CD8-positive, alpha-beta T cell (primary cell): ENCODE measurements at regions of chr19 and their contacts with region 1.

Region 1: DNA sequence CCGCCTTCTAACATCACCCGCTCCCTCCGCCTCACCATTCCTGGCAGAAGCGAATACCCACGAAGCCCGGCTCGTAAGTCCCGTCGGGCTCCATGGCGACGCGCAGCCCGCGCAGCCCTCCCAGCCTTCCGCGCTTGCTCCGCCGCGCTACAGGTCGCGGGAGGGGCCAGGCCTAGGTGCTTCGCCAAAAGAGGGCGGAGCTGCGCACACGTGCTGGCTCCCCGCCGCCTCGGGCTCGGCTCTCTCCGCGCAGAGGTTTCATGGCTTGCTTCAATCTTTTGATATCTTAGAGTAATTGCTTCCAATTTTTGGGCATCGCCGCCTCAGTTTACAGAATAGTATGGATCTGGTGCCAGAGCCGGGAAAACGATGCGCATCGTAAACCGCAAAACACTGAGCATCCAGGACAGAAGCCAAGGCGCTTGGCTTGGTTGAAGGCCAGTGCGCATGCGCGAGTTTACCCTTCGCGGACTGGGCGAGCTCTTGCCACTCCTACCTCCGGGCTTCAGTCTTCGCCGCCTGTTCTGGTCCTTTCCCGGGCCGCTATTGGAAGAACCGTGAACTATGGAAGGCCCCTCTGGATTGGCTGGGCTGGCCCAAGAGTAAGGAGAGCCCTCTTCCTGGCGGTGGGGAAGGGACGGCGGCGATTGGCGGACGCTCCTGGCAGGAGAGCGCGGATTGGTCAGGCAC is at the start of gene POLR2I:
- DNase-seq: peak; percentile 96 to 100 (median 99)
- ATAC-seq: peak; percentile 85
- H3K4me3 ChIP-seq: peak within 1 kb of the TSS; percentile 71 to 73
- H3K4me3 Mint-ChIP-seq: peak within 1 kb of the TSS; percentile 92
- H3K27ac ChIP-seq: peak within 1 kb of the TSS; percentile 77 to 92
- H3K27ac Mint-ChIP-seq: peak within 1 kb of the TSS; percentile 97
- H3K4me1 ChIP-seq: peaks cover 18% of the 10 kb centered on the region
- H3K4me1 Mint-ChIP-seq: peaks cover 39% of the 10 kb centered on the region
- H3K27me3 ChIP-seq: no peaks in the 10 kb centered on the region
- H3K27me3 Mint-ChIP-seq: no peaks in the 10 kb centered on the region
- CTCF ChIP-seq: no peak
- total RNA-seq, gene POLR2I: 27.4 to 34.7 TPM

Region 2: DNA sequence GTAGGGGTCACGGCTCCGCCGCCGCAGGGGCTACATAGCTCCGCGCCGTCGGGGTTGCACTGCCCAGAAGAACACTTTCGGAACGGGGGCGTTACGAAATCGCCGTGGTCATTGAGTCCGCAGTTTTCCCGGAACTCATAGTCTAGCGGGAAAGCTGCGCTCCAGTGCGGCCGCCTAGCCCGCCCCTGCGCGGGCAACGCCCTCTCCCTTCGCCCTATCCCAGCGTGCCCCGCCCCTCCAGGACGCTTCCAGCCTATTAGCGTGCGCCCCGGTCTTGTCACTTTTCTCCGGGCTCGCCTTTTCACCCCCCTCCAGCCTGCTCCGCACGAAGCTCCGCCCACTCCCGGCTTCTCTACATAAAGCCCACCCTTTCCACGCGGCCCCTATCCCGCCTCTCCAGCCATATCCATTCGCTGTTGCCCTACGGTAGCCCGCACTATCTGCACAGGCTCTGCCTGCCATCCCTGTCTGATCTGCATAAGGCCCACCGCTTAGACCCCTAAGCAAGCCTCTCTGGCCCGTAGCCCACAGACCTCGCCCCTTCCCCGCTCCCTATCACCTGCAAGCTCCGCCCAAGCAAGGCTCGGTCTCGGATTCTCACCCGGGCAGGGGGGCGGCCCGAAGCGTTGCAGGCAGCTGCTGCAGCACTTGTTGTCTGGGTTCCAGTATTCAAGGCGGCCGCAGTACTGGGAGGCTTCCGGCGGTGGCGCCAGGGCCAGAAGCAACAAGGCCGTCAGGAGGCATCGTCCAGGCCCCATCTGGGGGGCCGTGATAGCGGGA is 374.3 kb before region 1 on chr19:
- CTCF ChIA-PET with region 1: no interaction called
- POLR2A ChIA-PET with region 1: no interaction called
- intact Hi-C with region 1: loop called in 1 of 2 experiments (anchors 10 kb)
- DNase-seq: peak; percentile 87 to 97 (median 95)
- ATAC-seq: peak; percentile 65
- H3K4me3 ChIP-seq: peak overlapping the region; percentile 60 to 63
- H3K4me3 Mint-ChIP-seq: peak overlapping the region; percentile 87
- H3K27ac ChIP-seq: peak overlapping the region; percentile 50 to 58
- H3K27ac Mint-ChIP-seq: peak overlapping the region; percentile 83
- H3K4me1 ChIP-seq: peaks cover 51% of the 10 kb centered on the region
- H3K4me1 Mint-ChIP-seq: peaks cover 53% of the 10 kb centered on the region
- H3K27me3 ChIP-seq: no peaks in the 10 kb centered on the region
- H3K27me3 Mint-ChIP-seq: no peaks in the 10 kb centered on the region
- CTCF ChIP-seq: no peak

Region 3: DNA sequence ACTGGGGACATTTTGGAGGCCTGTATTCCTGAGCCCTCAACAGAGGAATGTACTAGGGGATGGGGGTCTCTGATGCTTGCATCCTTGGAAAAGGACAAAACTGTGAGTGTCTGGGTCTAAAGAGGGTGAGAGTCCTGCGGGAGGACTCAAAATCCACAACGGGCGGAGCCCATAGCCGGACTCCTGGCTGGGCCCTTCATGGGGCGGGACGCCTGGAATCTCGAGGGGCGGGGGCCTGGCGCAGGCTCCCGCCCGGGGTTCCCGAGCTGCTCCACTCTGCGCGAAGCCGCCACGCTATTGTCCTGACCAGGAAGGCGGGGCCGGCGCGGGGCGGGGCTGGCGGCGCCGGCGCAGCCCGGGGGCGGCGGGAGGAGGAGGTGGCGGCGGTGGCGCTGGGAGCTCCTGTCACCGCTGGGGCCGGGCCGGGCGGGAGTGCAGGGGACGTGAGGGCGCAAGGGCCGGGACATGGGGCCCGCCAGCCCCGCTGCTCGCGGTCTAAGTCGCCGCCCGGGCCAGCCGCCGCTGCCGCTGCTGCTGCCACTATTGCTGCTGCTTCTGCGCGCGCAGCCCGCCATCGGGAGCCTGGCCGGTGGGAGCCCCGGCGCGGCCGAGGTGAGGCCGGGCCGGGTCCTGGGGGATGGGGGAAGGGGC is 246.6 kb before region 1 on chr19 and contains the start of gene APLP1:
- CTCF ChIA-PET with region 1: no interaction called
- POLR2A ChIA-PET with region 1: no interaction called
- intact Hi-C with region 1: no loop called
- DNase-seq: peak in 8 of 9 experiments; percentile 43 to 75 (median 62)
- ATAC-seq: peak; percentile 63
- H3K4me3 ChIP-seq: peak within 1 kb of the TSS in 1 of 2 experiments; percentile 32
- H3K4me3 Mint-ChIP-seq: peak within 1 kb of the TSS; percentile 74
- H3K27ac ChIP-seq: no peak within 1 kb of the TSS
- H3K27ac Mint-ChIP-seq: no peak within 1 kb of the TSS
- H3K4me1 ChIP-seq: peaks cover 21% of the 10 kb centered on the region
- H3K4me1 Mint-ChIP-seq: peaks cover 15% of the 10 kb centered on the region
- H3K27me3 ChIP-seq: peaks cover 24 to 30% of the 10 kb centered on the region in 2 experiments
- H3K27me3 Mint-ChIP-seq: peaks cover 33% of the 10 kb centered on the region
- CTCF ChIP-seq: no peak
- total RNA-seq, gene APLP1: not detected

Region 4: DNA sequence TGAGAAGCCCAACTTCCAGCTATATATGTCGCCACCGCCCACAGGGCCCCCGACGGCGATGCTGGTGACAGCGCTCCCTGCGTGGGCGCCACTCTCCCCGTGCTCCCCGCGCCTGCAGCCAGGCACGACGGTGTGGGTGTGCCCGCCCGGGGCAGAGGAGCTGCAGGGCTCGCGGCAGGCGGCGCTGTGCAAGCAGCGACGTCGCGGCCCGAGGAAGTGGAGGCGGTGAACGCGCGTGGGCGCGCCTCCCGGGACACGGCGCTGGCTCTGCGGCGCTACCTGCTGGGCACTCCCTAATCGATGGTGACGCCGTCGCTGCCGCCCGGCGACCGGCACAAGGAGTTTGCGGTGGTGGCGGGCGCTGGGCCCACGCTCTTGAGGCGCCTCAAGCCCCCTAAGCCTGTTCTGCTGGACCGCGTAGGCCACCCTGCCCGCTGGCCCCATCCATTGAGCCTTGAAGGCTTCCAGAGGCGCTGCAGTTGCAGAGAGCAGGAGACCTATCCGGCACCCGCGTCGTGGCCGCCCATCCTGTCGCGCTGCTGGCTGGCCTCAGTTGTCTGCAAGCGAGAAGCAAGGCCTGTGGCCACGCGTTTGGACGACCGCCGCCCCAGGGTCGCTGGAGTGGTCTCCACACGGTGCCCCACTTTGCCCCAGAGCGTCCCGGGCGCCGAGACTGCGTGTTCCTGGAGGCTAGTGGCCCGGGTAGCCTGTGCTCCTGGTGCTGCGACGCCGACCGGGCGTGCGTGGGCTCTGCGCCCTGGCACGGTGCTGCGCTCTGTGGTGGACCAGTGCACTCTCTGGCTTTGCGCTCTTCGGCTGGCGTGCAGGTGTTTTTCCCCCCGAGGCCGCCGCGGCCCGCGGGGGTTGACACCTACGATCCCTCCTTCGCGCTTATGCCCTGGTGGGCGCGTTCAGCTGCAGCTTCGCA is 155.6 kb before region 1 on chr19:
- CTCF ChIA-PET with region 1: no interaction called
- POLR2A ChIA-PET with region 1: no interaction called
- intact Hi-C with region 1: loop called in 1 of 2 experiments (anchors 2 kb)
- DNase-seq: peak; percentile 60 to 93 (median 82)
- ATAC-seq: peak; percentile 99
- H3K4me3 ChIP-seq: peak overlapping the region; percentile 57 to 62
- H3K4me3 Mint-ChIP-seq: peak overlapping the region; percentile 70
- H3K27ac ChIP-seq: peak overlapping the region in 1 of 2 experiments; percentile 25
- H3K27ac Mint-ChIP-seq: no peak overlapping the region
- H3K4me1 ChIP-seq: peaks cover 43% of the 10 kb centered on the region
- H3K4me1 Mint-ChIP-seq: peaks cover 37% of the 10 kb centered on the region
- H3K27me3 ChIP-seq: peaks cover 0 to 4% of the 10 kb centered on the region in 2 experiments
- H3K27me3 Mint-ChIP-seq: peaks cover 4% of the 10 kb centered on the region
- CTCF ChIP-seq: peak; percentile 77

Region 5: GRCh38 chr19:36014029-36014924 is 100.6 kb before region 1 on chr19 and contains the start of gene ALKBH6:
- CTCF ChIA-PET with region 1: no interaction called
- POLR2A ChIA-PET with region 1: interaction called, 10 read pairs
- intact Hi-C with region 1: loop called (anchors 1 kb)
- DNase-seq: peak; percentile 98 to 99 (median 99)
- ATAC-seq: peak; percentile 98
- H3K4me3 ChIP-seq: peak within 1 kb of the TSS; percentile 73 to 80
- H3K4me3 Mint-ChIP-seq: peak within 1 kb of the TSS; percentile 91
- H3K27ac ChIP-seq: peak within 1 kb of the TSS; percentile 82 to 85
- H3K27ac Mint-ChIP-seq: peak within 1 kb of the TSS; percentile 91
- H3K4me1 ChIP-seq: peaks cover 23% of the 10 kb centered on the region
- H3K4me1 Mint-ChIP-seq: peaks cover 43% of the 10 kb centered on the region
- H3K27me3 ChIP-seq: no peaks in the 10 kb centered on the region
- H3K27me3 Mint-ChIP-seq: no peaks in the 10 kb centered on the region
- CTCF ChIP-seq: no peak
- total RNA-seq, gene ALKBH6: 28.8 to 34.1 TPM

Region 6: GRCh38 chr19:36132489-36132891 is 17.6 kb after region 1 on chr19:
- CTCF ChIA-PET with region 1: interaction called, 30 read pairs
- POLR2A ChIA-PET with region 1: interaction called, 21 read pairs
- intact Hi-C with region 1: loop called (anchors 1 kb)
- DNase-seq: peak in 4 of 9 experiments; percentile 19 to 60 (median 37)
- ATAC-seq: no peak
- H3K4me3 ChIP-seq: no peak overlapping the region
- H3K4me3 Mint-ChIP-seq: no peak overlapping the region
- H3K27ac ChIP-seq: peak overlapping the region in 1 of 2 experiments; percentile 54
- H3K27ac Mint-ChIP-seq: no peak overlapping the region
- H3K4me1 ChIP-seq: peaks cover 5% of the 10 kb centered on the region
- H3K4me1 Mint-ChIP-seq: peaks cover 15% of the 10 kb centered on the region
- H3K27me3 ChIP-seq: no peaks in the 10 kb centered on the region
- H3K27me3 Mint-ChIP-seq: no peaks in the 10 kb centered on the region
- CTCF ChIP-seq: no peak

Region 7: DNA sequence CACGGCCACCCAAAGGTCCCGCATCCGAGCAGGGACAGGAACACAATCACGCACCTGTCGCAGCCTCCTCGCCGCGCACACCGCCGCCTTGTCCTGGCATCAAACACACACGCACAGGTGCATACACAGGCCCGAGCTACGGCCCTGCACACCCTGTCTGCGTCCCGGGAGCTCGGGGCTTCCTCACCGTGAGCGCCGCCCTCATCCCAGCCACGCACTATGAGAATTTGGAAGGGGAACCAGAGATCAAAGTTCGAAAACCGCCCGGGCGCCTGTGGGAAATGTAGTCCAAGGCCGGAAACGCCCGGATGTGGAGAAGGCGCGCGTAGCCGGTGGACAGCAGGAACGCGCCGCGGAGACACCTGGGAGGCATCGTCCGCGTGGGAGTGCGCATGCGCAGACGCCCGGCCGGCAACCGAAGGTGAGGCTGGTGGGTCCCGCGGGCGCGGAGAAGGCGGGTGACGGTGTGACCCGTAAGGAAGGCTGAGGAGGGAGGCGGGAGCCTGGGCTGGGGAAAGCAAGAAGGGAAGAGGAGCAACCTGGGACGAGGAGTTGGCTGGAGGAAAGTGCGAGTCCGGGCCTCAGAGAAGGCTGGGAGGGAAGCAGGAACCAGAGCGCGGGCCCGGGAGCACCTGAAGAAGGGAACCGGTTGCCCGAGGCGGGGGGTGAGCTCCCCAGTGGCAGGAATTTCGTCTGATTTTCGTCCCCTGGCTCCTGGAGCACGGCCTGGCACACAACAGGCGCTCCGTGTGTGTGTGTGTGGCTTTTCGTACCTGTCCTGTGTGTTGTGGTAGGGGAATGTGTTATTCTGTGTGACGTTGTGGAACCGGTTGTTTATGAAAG is 572.5 kb after region 1 on chr19 and contains the start of gene ZNF567:
- CTCF ChIA-PET with region 1: no interaction called
- POLR2A ChIA-PET with region 1: no interaction called
- intact Hi-C with region 1: loop called in 1 of 2 experiments (anchors 2 kb)
- DNase-seq: peak; percentile 91 to 99 (median 98)
- ATAC-seq: peak; percentile 91
- H3K4me3 ChIP-seq: peak within 1 kb of the TSS; percentile 82 to 87
- H3K4me3 Mint-ChIP-seq: peak within 1 kb of the TSS; percentile 99
- H3K27ac ChIP-seq: peak within 1 kb of the TSS; percentile 71 to 81
- H3K27ac Mint-ChIP-seq: peak within 1 kb of the TSS; percentile 96
- H3K4me1 ChIP-seq: peaks cover 18% of the 10 kb centered on the region
- H3K4me1 Mint-ChIP-seq: peaks cover 35% of the 10 kb centered on the region
- H3K27me3 ChIP-seq: no peaks in the 10 kb centered on the region
- H3K27me3 Mint-ChIP-seq: no peaks in the 10 kb centered on the region
- CTCF ChIP-seq: no peak
- total RNA-seq, gene ZNF567: 10.7 to 11.1 TPM

Region 8: GRCh38 chr19:37413243-37414084 is 1298.6 kb after region 1 on chr19:
- CTCF ChIA-PET with region 1: no interaction called
- POLR2A ChIA-PET with region 1: no interaction called
- intact Hi-C with region 1: no loop called
- DNase-seq: no peak
- ATAC-seq: no peak
- H3K4me3 ChIP-seq: no peak overlapping the region
- H3K4me3 Mint-ChIP-seq: no peak overlapping the region
- H3K27ac ChIP-seq: no peak overlapping the region
- H3K27ac Mint-ChIP-seq: no peak overlapping the region
- H3K4me1 ChIP-seq: no peaks in the 10 kb centered on the region
- H3K4me1 Mint-ChIP-seq: no peaks in the 10 kb centered on the region
- H3K27me3 ChIP-seq: no peaks in the 10 kb centered on the region
- H3K27me3 Mint-ChIP-seq: no peaks in the 10 kb centered on the region
- CTCF ChIP-seq: no peak